Endothelial cell of umbilical vein (primary cell): ENCODE measurements at regions of chr10 and their contacts with region 1.

Region 1: GRCh38 chr10:45373576-45374349 is at the start of gene ALOX5:
- DNase-seq: no peak
- H3K4me3 ChIP-seq: peak within 1 kb of the TSS in 1 of 3 experiments; percentile 19
- H3K27ac ChIP-seq: no peak within 1 kb of the TSS
- H3K4me1 ChIP-seq: peaks cover 8% of the 10 kb centered on the region
- H3K27me3 ChIP-seq: peaks cover 26 to 44% of the 10 kb centered on the region in 2 experiments
- CTCF ChIP-seq: no peak
- POLR2A ChIP-seq: no peak
- total RNA-seq, gene ALOX5: not detected in 2 replicates

Region 2: DNA sequence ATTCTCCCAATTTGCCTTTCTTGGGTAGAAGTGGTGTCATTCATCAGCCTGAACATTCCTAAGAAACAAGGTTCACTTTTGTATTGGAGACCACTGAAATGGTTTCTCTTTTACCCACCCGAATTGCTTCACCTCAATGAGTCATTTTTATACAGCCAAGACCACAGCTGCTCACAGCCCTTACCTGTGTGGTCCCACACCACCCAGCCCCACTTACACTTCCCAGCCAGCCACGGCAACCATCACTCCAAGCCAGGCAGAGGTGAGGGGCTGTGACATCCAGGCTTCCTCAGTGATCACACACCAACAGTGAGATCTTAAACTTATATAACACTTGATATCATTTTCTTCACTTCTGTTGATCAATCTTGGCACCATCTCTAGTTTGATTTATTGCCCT is 79.1 kb before region 1 on chr10:
- CTCF ChIA-PET with region 1: no interaction called
- POLR2A ChIA-PET with region 1: no interaction called
- dilution Hi-C with region 1: no loop called
- intact Hi-C with region 1: loop called (anchors 5 kb)
- DNase-seq: no peak
- H3K4me3 ChIP-seq: no peak overlapping the region
- H3K27ac ChIP-seq: no peak overlapping the region
- H3K4me1 ChIP-seq: no peaks in the 10 kb centered on the region
- H3K27me3 ChIP-seq: no peaks in the 10 kb centered on the region
- CTCF ChIP-seq: no peak
- POLR2A ChIP-seq: no peak

Region 3: DNA sequence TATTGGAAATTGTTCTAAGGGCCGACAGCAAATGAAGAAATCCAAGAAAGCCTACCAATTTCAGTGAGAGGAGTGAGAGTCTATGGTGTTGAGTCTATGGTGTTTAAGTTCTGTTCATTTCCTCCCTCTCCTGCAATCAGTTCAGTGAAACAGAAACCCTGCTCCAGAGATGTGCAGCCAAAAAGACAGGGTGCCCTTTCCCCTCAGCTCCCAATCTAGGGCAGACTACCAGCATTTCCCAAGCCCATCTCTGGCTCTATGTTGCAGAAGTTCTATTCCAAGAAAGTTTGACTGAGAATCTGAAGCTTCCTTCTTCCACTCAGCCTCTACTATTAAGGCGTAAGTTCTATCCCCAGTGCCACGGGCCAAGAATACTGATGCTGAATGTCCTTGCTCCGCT is 18.3 kb before region 1 on chr10:
- CTCF ChIA-PET with region 1: no interaction called
- POLR2A ChIA-PET with region 1: no interaction called
- dilution Hi-C with region 1: no loop called
- intact Hi-C with region 1: no loop called
- DNase-seq: no peak
- H3K4me3 ChIP-seq: no peak overlapping the region
- H3K27ac ChIP-seq: no peak overlapping the region
- H3K4me1 ChIP-seq: no peaks in the 10 kb centered on the region
- H3K27me3 ChIP-seq: peaks cover 0 to 1% of the 10 kb centered on the region in 2 experiments
- CTCF ChIP-seq: no peak
- POLR2A ChIP-seq: no peak